K562 (cell line): ENCODE measurements at regions of chr15 and their contacts with region 1.

Region 1: DNA sequence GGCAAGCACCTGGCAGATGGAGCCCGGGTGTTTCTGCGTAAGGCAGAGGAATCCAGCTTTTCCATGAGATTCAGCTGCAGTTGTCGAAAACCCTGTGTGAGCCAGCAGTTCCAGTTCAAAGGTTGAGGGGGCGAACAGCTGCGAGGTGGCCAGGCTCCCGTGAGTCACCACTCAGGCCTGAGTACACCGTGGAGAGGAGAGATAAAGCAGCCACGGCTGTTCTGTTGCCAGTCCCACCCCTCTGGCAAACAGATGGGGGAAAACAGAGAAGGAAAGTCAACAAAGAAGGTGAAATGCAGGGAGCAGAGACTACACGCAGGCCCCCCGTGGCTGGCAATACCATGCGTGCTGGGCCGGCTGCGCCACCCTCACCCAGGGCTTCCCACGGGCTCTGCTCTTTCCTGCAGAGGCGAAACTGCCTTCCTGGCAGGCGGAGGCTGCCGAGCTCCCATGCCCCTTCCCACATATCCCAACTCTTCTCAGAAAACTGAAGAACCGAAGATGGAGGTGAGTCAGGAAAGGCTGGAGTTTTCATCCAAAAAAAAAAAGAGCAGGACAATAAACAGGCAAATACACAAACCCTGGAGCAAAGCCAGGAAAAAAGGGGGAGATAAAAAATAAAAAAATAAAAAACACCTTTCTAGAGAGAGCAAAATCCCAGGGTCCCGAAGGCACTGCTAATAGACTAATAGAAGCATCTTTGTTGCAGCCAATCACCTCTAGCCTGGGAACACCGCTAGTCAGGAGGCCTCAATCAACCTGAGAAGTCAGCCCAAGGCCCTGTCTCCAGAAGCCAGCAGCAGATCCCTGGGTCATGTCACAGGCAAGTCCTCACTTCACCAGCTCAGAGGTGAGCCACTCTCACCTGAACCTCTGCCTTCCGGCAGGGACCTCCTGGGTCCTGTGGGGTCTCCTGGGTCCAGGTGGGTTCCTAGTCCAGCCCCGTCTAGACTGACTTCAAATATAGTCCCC is 37.7 kb downstream of the FAM174B start:
- DNase-seq: peak; percentile 85 to 91 (median 88)
- ATAC-seq: peak; percentile 88
- H3K4me3 ChIP-seq: no peak overlapping the region; the same call in 1 of the 2 replicates
- H3K27ac ChIP-seq: peak overlapping the region; percentile 35; the same call in 1 of the 3 replicates
- H3K4me1 ChIP-seq: peaks cover 20 to 21% of the 10 kb centered on the region in 2 experiments; a peak in 4 of 5 replicates
- H3K27me3 ChIP-seq: peaks cover 0 to 17% of the 10 kb centered on the region in 2 experiments; a peak in 2 of 5 replicates
- CTCF ChIP-seq: no peak
- EP300 ChIP-seq: peak; percentile 80
- POLR2A ChIP-seq: no peak
- RAD21 ChIP-seq: no peak

Region 2: DNA sequence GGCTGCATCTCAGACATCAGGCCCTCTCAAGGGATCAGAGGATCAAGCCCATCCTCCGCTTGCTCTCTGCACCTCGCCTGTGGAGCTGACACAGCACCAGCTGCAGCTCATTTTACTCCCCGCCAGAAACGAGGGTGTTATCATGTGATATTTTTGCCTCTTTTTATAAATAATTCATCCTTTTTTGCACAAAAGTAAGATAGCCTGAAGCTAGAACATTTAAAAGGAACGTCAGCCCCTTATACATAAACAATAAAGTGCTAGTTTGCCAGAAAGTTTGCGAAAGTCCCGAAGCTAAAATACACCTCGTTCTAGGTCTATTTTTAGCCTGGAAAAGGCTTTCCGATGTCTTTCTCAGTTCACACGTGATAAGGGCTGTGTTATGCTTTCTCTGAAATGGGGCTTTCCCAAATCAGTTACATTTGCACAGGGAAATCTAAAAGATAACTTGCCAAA is 47.3 kb after region 1 on chr15:
- CTCF ChIA-PET with region 1: no interaction called
- POLR2A ChIA-PET with region 1: no interaction called
- in situ Hi-C with region 1: no loop called
- intact Hi-C with region 1: loop called (anchors 5 kb)
- DNase-seq: no peak
- ATAC-seq: no peak
- H3K4me3 ChIP-seq: no peak overlapping the region
- H3K27ac ChIP-seq: no peak overlapping the region
- H3K4me1 ChIP-seq: peaks cover 0 to 3% of the 10 kb centered on the region in 2 experiments; a peak in 2 of 5 replicates
- H3K27me3 ChIP-seq: peaks cover 25 to 40% of the 10 kb centered on the region in 2 experiments; a peak in 4 of 5 replicates
- CTCF ChIP-seq: no peak
- EP300 ChIP-seq: no peak
- POLR2A ChIP-seq: no peak
- RAD21 ChIP-seq: no peak